ENCODE measurements at regions of chr2 and their contacts with region 1.

Region 1: GRCh38 chr2:24046930-24047702 is at the start of gene WDCP:
- DNase-seq: peak; percentile 95
- ATAC-seq: peak; percentile 99
- H3K4me3 ChIP-seq: peak within 1 kb of the TSS; percentile 53 to 92 (median 79)
- H3K4me3 Mint-ChIP-seq: peak within 1 kb of the TSS; percentile 90
- H3K27ac ChIP-seq: peak within 1 kb of the TSS in 1 of 2 donors; percentile 79
- H3K27ac Mint-ChIP-seq: peak within 1 kb of the TSS; percentile 86
- H3K4me1 ChIP-seq: peaks cover 24 to 26% of the 10 kb centered on the region in 2 donors
- H3K4me1 Mint-ChIP-seq: peaks cover 25% of the 10 kb centered on the region
- H3K27me3 ChIP-seq: peaks cover 0 to 20% (median 2%) of the 10 kb centered on the region in 4 experiments
- H3K27me3 Mint-ChIP-seq: no peaks in the 10 kb centered on the region
- CTCF ChIP-seq: no peak
- total RNA-seq, gene WDCP: 21.6 and 22.3 TPM in 2 replicates

Region 2: DNA sequence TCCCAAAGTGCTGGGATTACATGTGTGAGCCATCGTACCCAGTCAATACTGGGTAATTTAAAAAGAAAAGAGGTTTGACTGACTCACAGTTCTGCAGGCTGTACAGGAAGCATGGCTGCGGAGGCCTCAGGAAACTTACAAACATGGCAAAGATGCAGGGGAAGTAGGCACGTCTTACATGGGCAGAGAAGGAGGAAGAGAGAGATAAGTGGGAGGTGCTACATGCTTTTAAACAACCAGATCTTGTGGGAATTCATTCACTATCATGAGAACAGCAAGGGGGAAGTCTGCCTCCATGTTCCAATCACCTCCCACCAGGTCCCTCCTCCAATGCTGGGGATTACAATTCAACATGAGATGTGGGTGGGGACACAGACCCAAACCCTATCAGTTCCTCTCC is 312.7 kb before region 1 on chr2:
- CTCF ChIA-PET with region 1: no interaction called
- POLR2A ChIA-PET with region 1: no interaction called
- intact Hi-C with region 1: no loop called
- DNase-seq: no peak
- ATAC-seq: no peak
- H3K4me3 ChIP-seq: no peak overlapping the region
- H3K4me3 Mint-ChIP-seq: no peak overlapping the region
- H3K27ac ChIP-seq: no peak overlapping the region
- H3K27ac Mint-ChIP-seq: no peak overlapping the region
- H3K4me1 ChIP-seq: no peaks in the 10 kb centered on the region
- H3K4me1 Mint-ChIP-seq: no peaks in the 10 kb centered on the region
- H3K27me3 ChIP-seq: no peaks in the 10 kb centered on the region
- H3K27me3 Mint-ChIP-seq: no peaks in the 10 kb centered on the region
- CTCF ChIP-seq: no peak

Region 3: DNA sequence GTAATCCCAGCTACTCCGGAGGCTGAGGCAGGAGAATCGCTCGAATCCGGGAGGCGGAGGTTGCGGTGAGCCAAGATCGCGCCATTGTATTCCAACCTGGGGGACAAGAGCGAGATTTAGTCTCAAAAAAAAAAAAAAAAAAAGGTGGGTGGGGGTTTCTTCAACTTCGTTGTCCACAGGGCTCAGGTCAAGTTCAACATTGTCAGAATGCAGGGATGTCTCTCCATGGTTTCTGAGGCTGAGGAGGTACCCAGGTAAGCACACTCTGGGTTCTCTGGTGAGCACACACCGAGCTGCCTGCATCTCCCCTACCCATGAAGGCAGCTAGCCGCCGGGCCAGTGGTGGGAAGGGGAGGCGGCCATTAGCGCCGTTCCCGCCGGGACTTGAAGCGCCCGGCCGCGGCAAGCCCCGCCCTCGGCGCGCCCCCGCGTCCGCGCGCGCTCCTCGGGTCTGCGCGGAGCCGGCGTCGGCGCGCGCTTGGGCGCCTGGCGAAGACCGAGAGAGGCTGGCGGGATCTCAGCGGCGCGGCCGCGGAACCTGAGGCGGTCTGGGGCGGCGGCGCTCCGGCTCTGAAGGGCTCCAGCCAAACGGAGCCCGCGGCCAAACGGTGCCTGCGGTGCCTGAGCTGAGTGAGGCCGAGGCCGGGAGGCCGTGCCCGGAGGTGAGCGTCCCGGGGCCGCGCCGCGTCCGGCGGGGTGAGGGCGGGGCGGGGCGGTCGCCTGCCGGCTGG is 107.0 kb before region 1 on chr2 and contains the start of gene UBXN2A:
- CTCF ChIA-PET with region 1: no interaction called
- POLR2A ChIA-PET with region 1: no interaction called
- intact Hi-C with region 1: loop called (anchors 1 kb)
- DNase-seq: peak; percentile 91
- ATAC-seq: peak; percentile 84
- H3K4me3 ChIP-seq: peak within 1 kb of the TSS; percentile 65 to 91 (median 80)
- H3K4me3 Mint-ChIP-seq: peak within 1 kb of the TSS; percentile 91
- H3K27ac ChIP-seq: peak within 1 kb of the TSS; percentile 36 to 72
- H3K27ac Mint-ChIP-seq: peak within 1 kb of the TSS; percentile 85
- H3K4me1 ChIP-seq: peaks cover 12 to 18% of the 10 kb centered on the region in 2 donors
- H3K4me1 Mint-ChIP-seq: peaks cover 21% of the 10 kb centered on the region
- H3K27me3 ChIP-seq: no peaks in the 10 kb centered on the region
- H3K27me3 Mint-ChIP-seq: no peaks in the 10 kb centered on the region
- CTCF ChIP-seq: no peak
- total RNA-seq, gene UBXN2A: 13.4 and 14.2 TPM in 2 replicates

Region 4: DNA sequence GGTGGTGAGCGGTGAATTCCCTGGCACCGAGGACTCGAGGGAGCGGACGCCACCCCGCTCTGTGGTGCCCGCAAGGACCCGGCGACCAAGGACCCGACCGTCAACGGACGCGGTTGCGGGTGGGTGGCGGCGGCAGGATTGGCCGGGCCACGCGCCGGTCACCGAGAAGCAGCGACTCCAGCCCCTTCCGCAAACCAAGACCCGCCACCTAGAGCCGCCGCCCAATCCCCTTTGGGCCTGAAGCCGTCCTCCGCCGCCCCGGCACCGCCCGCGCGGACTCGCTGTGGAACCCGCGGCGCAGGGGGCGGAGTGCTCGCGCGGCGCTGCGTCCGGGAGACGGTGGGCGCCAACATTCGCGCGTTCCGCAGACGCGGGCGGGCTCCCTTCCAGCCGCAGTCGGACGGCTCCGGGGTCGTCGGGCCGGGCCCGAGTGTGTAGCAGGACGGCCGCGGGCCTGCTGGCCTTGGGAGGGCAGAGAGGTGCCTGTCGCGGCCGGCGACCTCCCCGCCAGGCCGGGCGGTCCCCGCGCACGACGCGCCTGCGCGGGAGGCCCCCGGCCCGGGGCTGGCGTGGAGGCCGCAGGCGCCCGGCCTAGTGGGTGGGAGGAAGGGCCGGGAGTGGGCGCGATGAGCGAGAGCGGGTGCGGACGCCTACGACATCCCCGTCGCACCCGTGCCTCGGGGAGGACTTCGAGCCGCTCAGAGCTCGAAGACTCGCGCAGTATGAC is 76.2 kb after region 1 on chr2 and contains the starts of genes FAM228B and PFN4:
- CTCF ChIA-PET with region 1: interaction called, 3 read pairs
- POLR2A ChIA-PET with region 1: no interaction called
- intact Hi-C with region 1: loop called (anchors 1 kb)
- DNase-seq: peak; percentile 87
- ATAC-seq: peak; percentile 94
- H3K4me3 ChIP-seq: peak within 1 kb of the TSS; percentile 62 to 80 (median 73)
- H3K4me3 Mint-ChIP-seq: peak within 1 kb of the TSS; percentile 90
- H3K27ac ChIP-seq: peak within 1 kb of the TSS; percentile 70 to 80
- H3K27ac Mint-ChIP-seq: peak within 1 kb of the TSS; percentile 95
- H3K4me1 ChIP-seq: peaks cover 5 to 18% of the 10 kb centered on the region in 2 donors
- H3K4me1 Mint-ChIP-seq: peaks cover 20% of the 10 kb centered on the region
- H3K27me3 ChIP-seq: no peaks in the 10 kb centered on the region
- H3K27me3 Mint-ChIP-seq: no peaks in the 10 kb centered on the region
- CTCF ChIP-seq: no peak
- total RNA-seq, gene FAM228B: 47.2 and 49.6 TPM in 2 replicates
- total RNA-seq, gene PFN4: 0.39 and 0.66 TPM in 2 replicates

Region 5: GRCh38 chr2:24792874-24793760 is 746.0 kb after region 1 on chr2 and contains the starts of genes CENPO and PTRHD1:
- CTCF ChIA-PET with region 1: no interaction called
- POLR2A ChIA-PET with region 1: no interaction called
- intact Hi-C with region 1: loop called (anchors 2 kb)
- DNase-seq: peak; percentile 99
- ATAC-seq: peak; percentile 96
- H3K4me3 ChIP-seq: peak within 1 kb of the TSS; percentile 51 to 91 (median 82)
- H3K4me3 Mint-ChIP-seq: peak within 1 kb of the TSS; percentile 99
- H3K27ac ChIP-seq: peak within 1 kb of the TSS; percentile 84 to 87
- H3K27ac Mint-ChIP-seq: peak within 1 kb of the TSS; percentile 100
- H3K4me1 ChIP-seq: peaks cover 10 to 16% of the 10 kb centered on the region in 2 donors
- H3K4me1 Mint-ChIP-seq: peaks cover 19% of the 10 kb centered on the region
- H3K27me3 ChIP-seq: no peaks in the 10 kb centered on the region
- H3K27me3 Mint-ChIP-seq: no peaks in the 10 kb centered on the region
- CTCF ChIP-seq: peak; percentile 68
- total RNA-seq, gene CENPO: 10.4 and 10.8 TPM in 2 replicates
- total RNA-seq, gene PTRHD1: 20.2 and 20.4 TPM in 2 replicates